ENCODE measurements at regions of chr9 and their contacts with region 1.

Region 1: GRCh38 chr9:2872257-2872935 is 28.5 kb upstream of the PUM3 start:
- DNase-seq: peak in 1 of 2 experiments; percentile 45
- ATAC-seq: peak; percentile 73 to 81; a peak in 5 of 6 replicates
- H3K4me3 ChIP-seq: no peak overlapping the region
- H3K27ac ChIP-seq: no peak overlapping the region
- H3K4me1 ChIP-seq: no peaks in the 10 kb centered on the region
- CTCF ChIP-seq: peak; percentile 60
- EP300 ChIP-seq: no peak
- POLR2A ChIP-seq: no peak
- RAD21 ChIP-seq: peak; percentile 60 to 69

Region 2: DNA sequence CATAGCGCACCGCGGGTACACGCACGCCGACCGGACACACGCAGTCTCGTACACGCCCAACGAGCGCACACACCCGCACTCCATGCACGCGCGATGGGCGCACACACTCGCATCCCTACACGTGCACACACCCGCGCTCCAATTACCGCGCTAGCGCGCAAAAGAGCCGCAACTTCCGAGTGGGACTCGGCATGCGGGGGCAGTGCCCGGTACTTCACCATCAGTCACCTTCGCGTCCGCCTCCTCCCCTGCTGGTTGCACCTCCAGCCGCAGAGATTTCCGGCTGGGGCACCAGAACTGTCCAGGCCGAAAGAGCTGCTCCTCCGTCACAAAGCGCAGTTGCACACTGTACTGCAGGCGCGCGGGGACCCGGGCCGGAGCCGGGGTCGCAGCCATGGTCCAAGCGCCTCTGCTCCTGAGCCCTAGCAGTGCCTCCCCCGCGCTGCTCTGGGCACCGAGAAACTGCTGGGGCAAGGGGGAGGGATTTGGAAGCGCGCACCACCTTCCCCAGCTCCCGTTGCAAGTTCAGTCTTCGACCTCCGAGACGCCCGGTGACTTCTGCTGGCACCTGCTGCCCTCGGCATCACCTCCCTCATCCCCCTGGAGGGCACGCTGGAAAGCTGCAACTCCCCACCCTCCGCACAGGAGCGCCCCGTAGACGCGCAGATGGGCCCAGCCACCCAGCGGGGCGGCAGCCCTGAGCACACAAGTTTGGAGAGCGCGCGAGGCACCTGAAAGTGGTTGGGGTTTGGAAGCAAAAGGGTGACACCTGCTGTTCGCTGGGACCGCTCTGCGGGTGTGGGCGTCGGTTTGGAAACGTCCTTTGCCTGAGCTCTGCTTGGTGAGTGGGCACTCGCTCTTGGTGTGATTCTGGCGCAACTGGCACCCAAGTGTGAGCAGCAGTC is 308.9 kb after region 1 on chr9:
- CTCF ChIA-PET with region 1: interaction called, 19 read pairs
- POLR2A ChIA-PET with region 1: no interaction called
- DNase-seq: peak; percentile 8 to 48
- ATAC-seq: peak; percentile 75 to 89
- H3K4me3 ChIP-seq: peak overlapping the region; percentile 31; the same call in 2 of the 3 replicates
- H3K27ac ChIP-seq: no peak overlapping the region
- H3K4me1 ChIP-seq: no peaks in the 10 kb centered on the region
- CTCF ChIP-seq: peak; percentile 46
- EP300 ChIP-seq: no peak
- POLR2A ChIP-seq: no peak
- RAD21 ChIP-seq: peak; percentile 59 to 60

Region 3: DNA sequence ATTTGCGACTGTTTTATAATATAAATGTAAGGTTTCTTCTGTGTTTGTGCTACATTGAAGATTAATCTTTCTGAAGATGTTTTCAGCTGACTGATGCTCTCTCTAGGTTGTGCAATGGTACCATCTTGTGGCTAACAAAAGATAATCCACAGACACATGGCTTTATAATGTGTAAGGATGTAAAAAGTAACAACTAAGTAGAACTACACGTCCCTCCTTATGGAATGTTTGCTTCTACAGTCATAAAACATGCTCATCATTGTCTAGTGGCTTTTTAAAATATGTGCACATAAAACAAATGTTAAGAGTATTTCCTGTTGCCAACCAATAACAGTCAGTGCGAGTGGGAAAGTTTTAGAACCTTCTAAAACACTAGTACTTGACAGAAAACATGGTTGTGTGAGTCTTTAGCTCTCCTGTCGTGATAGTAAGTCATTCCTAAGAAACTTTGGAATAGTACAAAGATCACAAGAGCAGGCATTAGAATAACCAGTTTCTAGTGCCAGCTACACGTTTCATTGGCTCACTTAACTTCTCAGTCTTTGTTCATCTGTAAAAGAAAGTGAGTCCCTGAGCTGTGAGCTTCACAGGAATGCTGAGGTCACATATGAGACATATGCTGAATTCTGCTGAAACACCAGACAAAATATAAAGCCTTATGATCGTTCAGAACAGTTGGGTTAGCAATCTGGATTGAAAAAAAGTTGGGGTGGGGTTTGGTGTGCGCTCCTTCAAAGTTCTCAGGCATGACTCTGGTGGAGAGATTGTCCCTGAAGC is 1503.2 kb after region 1 on chr9:
- CTCF ChIA-PET with region 1: interaction called, 11 read pairs
- POLR2A ChIA-PET with region 1: no interaction called
- DNase-seq: peak; percentile 52 to 59
- ATAC-seq: peak; percentile 79 to 90; a peak in 5 of 6 replicates
- H3K4me3 ChIP-seq: no peak overlapping the region
- H3K27ac ChIP-seq: no peak overlapping the region
- H3K4me1 ChIP-seq: no peaks in the 10 kb centered on the region
- CTCF ChIP-seq: peak; percentile 90
- EP300 ChIP-seq: no peak
- POLR2A ChIP-seq: no peak
- RAD21 ChIP-seq: peak; percentile 90 to 94